ENCODE measurements at regions of chr5 and their contacts with region 1.

Region 1: GRCh38 chr5:178279725-178280438 is 47.3 kb upstream of the PHYKPL start:
- DNase-seq: peak; percentile 89 to 93
- ATAC-seq: peak; percentile 87 to 97 (median 93)
- H3K4me3 ChIP-seq: no peak overlapping the region
- H3K27ac ChIP-seq: no peak overlapping the region
- H3K4me1 ChIP-seq: peaks cover 0 to 16% (median 4%) of the 10 kb centered on the region in 9 donors
- H3K27me3 ChIP-seq: peaks cover 0 to 21% (median 3%) of the 10 kb centered on the region in 7 donors
- CTCF ChIP-seq: peak; percentile 87 to 98 (median 96)

Region 2: DNA sequence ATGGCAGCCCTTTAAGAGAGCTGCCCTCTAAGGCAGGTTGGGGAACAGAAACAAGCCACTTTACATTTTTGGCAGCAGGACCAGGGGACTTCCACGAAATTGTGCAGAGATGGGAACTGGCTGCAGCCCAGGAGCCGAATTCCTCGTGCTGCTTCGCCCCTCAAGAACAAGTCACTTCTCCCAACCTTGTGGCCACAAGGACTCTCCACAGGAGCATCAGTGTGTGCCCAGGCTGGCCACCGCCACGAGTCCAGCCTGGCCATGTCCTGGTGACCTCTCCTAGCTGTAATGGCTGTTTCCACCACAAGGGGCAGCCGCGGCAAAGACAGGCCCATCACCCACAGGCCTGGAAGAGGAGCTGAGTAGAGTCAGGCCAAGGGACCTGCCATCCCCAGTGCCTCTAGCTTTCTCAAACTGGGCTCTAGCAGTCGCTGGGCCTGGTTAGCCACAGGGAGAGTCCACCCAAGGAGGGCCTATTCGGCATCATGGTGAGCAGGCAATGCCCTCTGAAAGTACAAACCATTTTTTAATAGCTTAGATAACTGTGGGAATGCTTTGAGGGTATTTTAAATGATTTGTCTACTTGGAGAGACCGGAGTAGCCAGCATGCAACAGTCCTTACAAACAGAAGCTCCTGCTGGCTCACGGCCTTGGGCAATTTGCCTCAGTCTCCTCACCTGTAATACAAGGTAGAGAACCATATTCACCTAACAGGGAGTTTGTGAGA is 181.3 kb after region 1 on chr5:
- intact Hi-C with region 1: loop called in 4 of 10 experiments (anchors 5 to 10 kb)
- DNase-seq: peak; percentile 80 to 88
- ATAC-seq: peak; percentile 92 to 98 (median 96)
- H3K4me3 ChIP-seq: peak overlapping the region in 1 of 10 donors; percentile 25
- H3K27ac ChIP-seq: peak overlapping the region; percentile 53 to 82 (median 71)
- H3K4me1 ChIP-seq: peaks cover 0 to 16% (median 11%) of the 10 kb centered on the region in 9 donors
- H3K27me3 ChIP-seq: no peaks in the 10 kb centered on the region
- CTCF ChIP-seq: peak; percentile 81 to 92 (median 88)

Region 3: GRCh38 chr5:178590141-178590923 is 310.4 kb after region 1 on chr5 and contains the start of gene COL23A1:
- intact Hi-C with region 1: loop called (anchors 1 to 10 kb)
- DNase-seq: peak; percentile 74 to 75
- ATAC-seq: peak; percentile 82 to 91 (median 87)
- H3K4me3 ChIP-seq: peak within 1 kb of the TSS in 9 of 10 donors; percentile 37 to 72 (median 58)
- H3K27ac ChIP-seq: peak within 1 kb of the TSS; percentile 27 to 80 (median 71)
- H3K4me1 ChIP-seq: peaks cover 3 to 36% (median 28%) of the 10 kb centered on the region in 9 donors
- H3K27me3 ChIP-seq: peaks cover 0 to 45% (median 10%) of the 10 kb centered on the region in 7 donors
- CTCF ChIP-seq: peak; percentile 42 to 82 (median 72)
- total RNA-seq, gene COL23A1: 9.8 to 29.0 (median 18.8) TPM

Region 4: DNA sequence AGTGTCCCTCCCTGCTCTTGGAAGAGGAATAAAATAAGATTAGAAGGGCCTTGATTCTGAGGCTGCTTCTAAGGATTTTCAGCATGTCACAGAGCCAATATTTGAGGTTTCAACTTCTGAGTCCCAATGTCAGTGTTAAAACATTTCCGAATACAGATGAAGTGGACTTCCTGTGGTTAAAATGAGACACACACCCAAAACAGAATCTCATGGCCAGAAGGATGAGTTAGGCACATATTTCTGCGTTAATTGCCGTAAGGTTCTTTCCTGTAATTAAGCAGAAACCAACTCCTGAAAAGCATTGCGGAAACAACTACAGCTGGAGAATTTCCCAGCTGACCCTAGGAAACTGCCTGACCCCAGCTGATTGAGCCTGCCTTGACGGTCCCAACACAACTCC is 569.4 kb after region 1 on chr5:
- intact Hi-C with region 1: loop called in 1 of 10 experiments (anchors 10 kb)
- DNase-seq: no peak
- ATAC-seq: peak in 3 of 8 donors; percentile 19 to 23 (median 21)
- H3K4me3 ChIP-seq: no peak overlapping the region
- H3K27ac ChIP-seq: no peak overlapping the region
- H3K4me1 ChIP-seq: peaks cover 0 to 11% (median 0%) of the 10 kb centered on the region in 9 donors
- H3K27me3 ChIP-seq: no peaks in the 10 kb centered on the region
- CTCF ChIP-seq: no peak